Activated B cell treated with CpG ODN at 0.5 μM for 24 hours (primary cell): ENCODE measurements at regions of chr7 and their contacts with region 1.

Region 1: GRCh38 chr7:74231232-74231590 is 21.4 kb downstream of the LAT2 start:
- DNase-seq: peak; percentile 63
- ATAC-seq: peak; percentile 85
- H3K4me3 Mint-ChIP-seq: peak overlapping the region; percentile 55
- H3K27ac Mint-ChIP-seq: peak overlapping the region; percentile 92
- H3K4me1 Mint-ChIP-seq: peaks cover 68% of the 10 kb centered on the region
- H3K27me3 Mint-ChIP-seq: no peaks in the 10 kb centered on the region
- CTCF ChIP-seq: no peak

Region 2: GRCh38 chr7:74217455-74218342 is 13.5 kb before region 1 on chr7:
- CTCF ChIA-PET with region 1: no interaction called
- POLR2A ChIA-PET with region 1: interaction called, 142 read pairs
- intact Hi-C with region 1: loop called (anchors 1 kb)
- DNase-seq: peak; percentile 51
- ATAC-seq: peak; percentile 59
- H3K4me3 Mint-ChIP-seq: peak overlapping the region; percentile 69
- H3K27ac Mint-ChIP-seq: peak overlapping the region; percentile 90
- H3K4me1 Mint-ChIP-seq: peaks cover 63% of the 10 kb centered on the region
- H3K27me3 Mint-ChIP-seq: no peaks in the 10 kb centered on the region
- CTCF ChIP-seq: no peak

Region 3: GRCh38 chr7:74242122-74242443 is 10.9 kb after region 1 on chr7:
- CTCF ChIA-PET with region 1: interaction called, 3 read pairs
- POLR2A ChIA-PET with region 1: interaction called, 35 read pairs
- intact Hi-C with region 1: loop called (anchors 1 kb)
- DNase-seq: no peak
- ATAC-seq: peak; percentile 30
- H3K4me3 Mint-ChIP-seq: peak overlapping the region; percentile 74
- H3K27ac Mint-ChIP-seq: peak overlapping the region; percentile 81
- H3K4me1 Mint-ChIP-seq: peaks cover 32% of the 10 kb centered on the region
- H3K27me3 Mint-ChIP-seq: no peaks in the 10 kb centered on the region
- CTCF ChIP-seq: no peak